ENCODE measurements at regions of chr6 and their contacts with region 1.

Region 1: DNA sequence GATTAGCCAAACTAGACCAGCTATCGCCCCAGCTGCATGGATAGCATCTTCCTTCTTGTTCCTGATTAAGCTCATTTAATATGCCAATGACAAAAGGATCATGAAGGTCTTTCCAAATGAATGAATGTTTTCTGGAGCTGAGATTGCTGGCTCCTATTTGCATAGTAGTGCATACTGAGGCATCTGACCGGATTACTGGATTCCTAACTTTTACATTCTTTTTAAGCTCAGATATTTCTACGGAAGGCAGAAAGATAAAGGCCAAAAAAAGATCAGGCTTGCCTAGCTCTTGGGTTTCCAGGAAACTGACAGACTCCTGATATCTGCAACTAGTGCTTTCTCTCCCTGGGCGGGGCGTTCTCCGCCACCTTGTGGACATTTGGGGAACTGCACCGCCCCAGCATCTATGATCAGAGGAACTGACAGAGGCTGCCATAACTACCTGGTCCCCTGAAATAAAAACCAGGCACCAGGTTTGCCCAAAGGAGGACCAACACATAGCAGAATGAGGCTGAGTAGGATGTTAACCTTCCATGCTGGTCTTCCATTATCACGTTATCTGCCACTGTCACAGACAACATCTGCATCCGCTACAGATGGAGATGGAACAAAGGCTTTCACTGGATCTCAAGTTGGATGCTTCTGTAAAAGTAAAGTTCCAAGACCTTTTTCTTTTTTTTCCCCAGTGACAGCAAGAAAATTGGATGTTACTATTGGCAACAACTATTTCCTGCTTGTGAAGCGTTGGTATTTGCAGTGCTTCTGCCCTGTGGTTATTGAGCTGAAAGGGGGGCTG is 33.2 kb downstream of the NT5E start:
- DNase-seq: peak; percentile 89
- ATAC-seq: peak; percentile 92
- H3K4me3 Mint-ChIP-seq: no peak overlapping the region
- H3K27ac Mint-ChIP-seq: no peak overlapping the region
- H3K4me1 Mint-ChIP-seq: peaks cover 18% of the 10 kb centered on the region
- H3K27me3 Mint-ChIP-seq: no peaks in the 10 kb centered on the region

Region 2: GRCh38 chr6:85344996-85345395 is 138.1 kb before region 1 on chr6:
- CTCF ChIA-PET with region 1: interaction called, 120 read pairs
- POLR2A ChIA-PET with region 1: no interaction called
- DNase-seq: no peak
- ATAC-seq: no peak
- H3K4me3 Mint-ChIP-seq: no peak overlapping the region
- H3K27ac Mint-ChIP-seq: no peak overlapping the region
- H3K4me1 Mint-ChIP-seq: no peaks in the 10 kb centered on the region
- H3K27me3 Mint-ChIP-seq: peaks cover 28% of the 10 kb centered on the region

Region 3: GRCh38 chr6:85372188-85372914 is 110.8 kb before region 1 on chr6:
- CTCF ChIA-PET with region 1: interaction called, 18 read pairs
- POLR2A ChIA-PET with region 1: no interaction called
- DNase-seq: no peak
- ATAC-seq: no peak
- H3K4me3 Mint-ChIP-seq: no peak overlapping the region
- H3K27ac Mint-ChIP-seq: no peak overlapping the region
- H3K4me1 Mint-ChIP-seq: peaks cover 12% of the 10 kb centered on the region
- H3K27me3 Mint-ChIP-seq: no peaks in the 10 kb centered on the region

Region 4: GRCh38 chr6:85419046-85419759 is 63.9 kb before region 1 on chr6:
- CTCF ChIA-PET with region 1: interaction called, 13 read pairs
- POLR2A ChIA-PET with region 1: no interaction called
- DNase-seq: no peak
- ATAC-seq: no peak
- H3K4me3 Mint-ChIP-seq: no peak overlapping the region
- H3K27ac Mint-ChIP-seq: no peak overlapping the region
- H3K4me1 Mint-ChIP-seq: peaks cover 12% of the 10 kb centered on the region
- H3K27me3 Mint-ChIP-seq: peaks cover 2% of the 10 kb centered on the region

Region 5: GRCh38 chr6:85449818-85450759 is 33.0 kb before region 1 on chr6 and contains the start of gene NT5E:
- CTCF ChIA-PET with region 1: interaction called, 158 read pairs
- POLR2A ChIA-PET with region 1: interaction called, 3 read pairs
- DNase-seq: peak; percentile 74
- ATAC-seq: peak; percentile 64
- H3K4me3 Mint-ChIP-seq: peak within 1 kb of the TSS; percentile 93
- H3K27ac Mint-ChIP-seq: peak within 1 kb of the TSS; percentile 89
- H3K4me1 Mint-ChIP-seq: peaks cover 67% of the 10 kb centered on the region
- H3K27me3 Mint-ChIP-seq: peaks cover 11% of the 10 kb centered on the region
- total RNA-seq, gene NT5E: 7.4 to 7.6 TPM

Region 6: GRCh38 chr6:85494554-85495536 is 11.7 kb after region 1 on chr6:
- CTCF ChIA-PET with region 1: interaction called, 66 read pairs
- POLR2A ChIA-PET with region 1: interaction called, 3 read pairs
- DNase-seq: no peak
- ATAC-seq: no peak
- H3K4me3 Mint-ChIP-seq: no peak overlapping the region
- H3K27ac Mint-ChIP-seq: no peak overlapping the region
- H3K4me1 Mint-ChIP-seq: peaks cover 10% of the 10 kb centered on the region
- H3K27me3 Mint-ChIP-seq: no peaks in the 10 kb centered on the region

Region 7: GRCh38 chr6:85826997-85827396 is 343.9 kb after region 1 on chr6:
- CTCF ChIA-PET with region 1: no interaction called
- POLR2A ChIA-PET with region 1: no interaction called
- DNase-seq: no peak
- ATAC-seq: no peak
- H3K4me3 Mint-ChIP-seq: no peak overlapping the region
- H3K27ac Mint-ChIP-seq: no peak overlapping the region
- H3K4me1 Mint-ChIP-seq: no peaks in the 10 kb centered on the region
- H3K27me3 Mint-ChIP-seq: no peaks in the 10 kb centered on the region

Measured in activated CD8-positive, alpha-beta T cell treated with anti-CD3 and anti-CD28 coated beads, Interleukin-2, amount 10 ng/mL, durations not matched to agents 7 days and 5 days (primary cell).